H1 (cell line): ENCODE measurements at regions of chr17 and their contacts with region 1.

Region 1: GRCh38 chr17:75001915-75002843 is 10.3 kb upstream of the MRPL58 start:
- DNase-seq: no peak
- H3K4me3 ChIP-seq: no peak overlapping the region
- H3K27ac ChIP-seq: no peak overlapping the region
- H3K4me1 ChIP-seq: no peaks in the 10 kb centered on the region
- H3K27me3 ChIP-seq: no peaks in the 10 kb centered on the region
- CTCF ChIP-seq: no peak
- EP300 ChIP-seq: no peak
- POLR2A ChIP-seq: no peak
- RAD21 ChIP-seq: no peak

Region 2: DNA sequence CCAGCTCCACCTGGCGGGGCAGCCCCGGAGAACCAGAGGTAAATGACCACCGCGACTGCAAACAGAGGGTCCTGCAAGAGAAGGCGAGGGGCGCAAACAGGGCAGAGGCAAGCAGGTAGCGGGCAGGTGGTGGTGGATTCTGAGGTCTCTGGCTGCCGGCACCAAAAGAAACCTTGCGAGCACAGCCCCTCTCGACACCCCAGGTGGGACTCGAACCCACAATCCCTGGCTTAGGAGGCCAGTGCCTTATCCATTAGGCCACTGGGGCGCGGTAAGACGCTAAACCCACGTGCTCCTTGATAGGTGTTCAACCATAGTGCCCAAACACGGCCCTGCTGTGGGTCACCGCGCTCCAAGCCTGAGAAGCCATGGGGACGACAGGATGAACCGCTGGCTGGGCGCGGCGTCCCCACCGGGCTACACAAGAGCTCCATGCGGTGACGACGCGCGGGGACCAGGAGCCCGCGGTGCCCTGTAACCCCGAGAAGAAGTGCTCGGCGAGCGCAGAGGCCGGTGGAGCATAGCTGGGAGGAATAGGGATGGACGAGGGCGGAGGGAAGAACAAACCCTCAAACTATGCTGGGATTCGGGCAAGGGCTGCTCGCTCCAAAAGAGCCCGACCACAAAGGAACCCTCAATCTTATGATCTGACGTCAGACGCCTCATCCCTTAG is 32.2 kb after region 1 on chr17:
- CTCF ChIA-PET with region 1: interaction called, 12 read pairs
- POLR2A ChIA-PET with region 1: interaction called, 3 read pairs
- DNase-seq: peak; percentile 87 to 97
- H3K4me3 ChIP-seq: peak overlapping the region; percentile 82 to 98 (median 95)
- H3K27ac ChIP-seq: peak overlapping the region; percentile 89
- H3K4me1 ChIP-seq: peaks cover 3 to 10% (median 7%) of the 10 kb centered on the region in 4 experiments; a peak in 5 of 7 replicates
- H3K27me3 ChIP-seq: no peaks in the 10 kb centered on the region
- CTCF ChIP-seq: peak in 1 of 3 experiments; percentile 5; a peak in 1 of 4 replicates
- EP300 ChIP-seq: no peak
- POLR2A ChIP-seq: peak; percentile 41 to 43; a peak in 2 of 3 replicates
- RAD21 ChIP-seq: no peak

Region 3: GRCh38 chr17:75131280-75132017 is 129.3 kb after region 1 on chr17 and contains the start of gene NT5C:
- CTCF ChIA-PET with region 1: no interaction called
- POLR2A ChIA-PET with region 1: no interaction called
- DNase-seq: peak; percentile 58 to 91
- H3K4me3 ChIP-seq: peak within 1 kb of the TSS; percentile 69 to 95 (median 74)
- H3K27ac ChIP-seq: peak within 1 kb of the TSS; percentile 81
- H3K4me1 ChIP-seq: peaks cover 0 to 5% (median 4%) of the 10 kb centered on the region in 4 experiments; a peak in 5 of 7 replicates
- H3K27me3 ChIP-seq: no peaks in the 10 kb centered on the region
- CTCF ChIP-seq: peak; percentile 65 to 72 (median 68)
- EP300 ChIP-seq: no peak
- POLR2A ChIP-seq: peak; percentile 72 to 75; a peak in 2 of 3 replicates
- RAD21 ChIP-seq: peak; percentile 32 to 42; a peak in 2 of 4 replicates
- total RNA-seq, gene NT5C: 52.1 and 66.9 TPM in 2 replicates